GM10248 (cell line): ENCODE measurements at regions of chr16 and their contacts with region 1.

Region 1: GRCh38 chr16:46673320-46674013 is 15.5 kb downstream of the VPS35 start:
- DNase-seq: peak; percentile 66
- CTCF ChIP-seq: peak; percentile 92

Region 2: GRCh38 chr16:46688627-46689364 is 15.3 kb after region 1 on chr16 and contains the start of gene VPS35:
- CTCF ChIA-PET with region 1: interaction called, 39 read pairs
- POLR2A ChIA-PET with region 1: no interaction called
- DNase-seq: peak; percentile 96
- CTCF ChIP-seq: peak; percentile 15

Region 3: GRCh38 chr16:46801428-46802049 is 128.1 kb after region 1 on chr16:
- CTCF ChIA-PET with region 1: interaction called, 19 read pairs
- POLR2A ChIA-PET with region 1: no interaction called
- DNase-seq: no peak
- CTCF ChIP-seq: no peak

Region 4: DNA sequence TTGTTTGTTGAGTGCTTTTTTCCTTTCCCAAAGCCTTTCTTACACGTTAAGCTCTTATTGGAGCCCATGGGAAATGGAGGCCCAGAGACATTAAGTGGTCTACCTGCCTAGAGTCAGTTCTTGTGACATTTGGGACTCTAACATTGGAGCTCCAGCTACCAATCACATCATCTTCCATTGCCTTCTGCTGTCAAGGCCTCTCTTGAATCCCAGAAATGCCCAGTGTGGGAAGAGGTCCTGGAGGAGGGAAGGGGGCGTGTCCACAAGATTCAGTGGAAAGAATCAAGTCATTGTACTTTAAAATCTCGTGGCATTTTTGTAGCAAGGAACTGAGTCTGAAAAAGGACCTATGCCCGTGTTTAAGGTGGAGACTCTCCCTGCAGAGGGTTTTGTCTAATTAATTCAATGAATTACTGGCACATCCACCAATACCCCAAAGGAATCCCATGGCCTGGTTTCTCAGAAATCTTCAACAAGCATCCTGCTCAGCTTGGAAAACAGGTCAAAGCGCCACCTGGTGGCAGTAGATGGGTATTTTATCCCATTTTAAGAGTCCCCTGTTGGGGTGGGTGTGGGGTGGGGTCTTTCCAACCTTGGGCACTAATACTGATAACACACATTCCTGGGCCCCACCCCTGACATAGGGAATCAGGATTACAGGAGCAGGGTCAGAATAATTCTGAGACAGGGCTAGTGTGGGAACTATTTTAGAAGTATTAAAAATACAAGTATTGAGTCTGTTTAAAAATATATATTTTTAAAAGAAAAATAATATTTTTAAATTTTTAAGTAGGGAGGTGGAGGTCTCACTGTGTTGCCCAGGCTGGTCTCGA is 235.3 kb after region 1 on chr16:
- CTCF ChIA-PET with region 1: interaction called, 68 read pairs
- POLR2A ChIA-PET with region 1: no interaction called
- DNase-seq: peak; percentile 66
- CTCF ChIP-seq: peak; percentile 63

Region 5: GRCh38 chr16:46929378-46930332 is 256.2 kb after region 1 on chr16:
- CTCF ChIA-PET with region 1: interaction called, 29 read pairs
- POLR2A ChIA-PET with region 1: no interaction called
- DNase-seq: peak; percentile 89
- CTCF ChIP-seq: peak; percentile 91